ENCODE measurements at regions of chr10 and their contacts with region 1.

Region 1: DNA sequence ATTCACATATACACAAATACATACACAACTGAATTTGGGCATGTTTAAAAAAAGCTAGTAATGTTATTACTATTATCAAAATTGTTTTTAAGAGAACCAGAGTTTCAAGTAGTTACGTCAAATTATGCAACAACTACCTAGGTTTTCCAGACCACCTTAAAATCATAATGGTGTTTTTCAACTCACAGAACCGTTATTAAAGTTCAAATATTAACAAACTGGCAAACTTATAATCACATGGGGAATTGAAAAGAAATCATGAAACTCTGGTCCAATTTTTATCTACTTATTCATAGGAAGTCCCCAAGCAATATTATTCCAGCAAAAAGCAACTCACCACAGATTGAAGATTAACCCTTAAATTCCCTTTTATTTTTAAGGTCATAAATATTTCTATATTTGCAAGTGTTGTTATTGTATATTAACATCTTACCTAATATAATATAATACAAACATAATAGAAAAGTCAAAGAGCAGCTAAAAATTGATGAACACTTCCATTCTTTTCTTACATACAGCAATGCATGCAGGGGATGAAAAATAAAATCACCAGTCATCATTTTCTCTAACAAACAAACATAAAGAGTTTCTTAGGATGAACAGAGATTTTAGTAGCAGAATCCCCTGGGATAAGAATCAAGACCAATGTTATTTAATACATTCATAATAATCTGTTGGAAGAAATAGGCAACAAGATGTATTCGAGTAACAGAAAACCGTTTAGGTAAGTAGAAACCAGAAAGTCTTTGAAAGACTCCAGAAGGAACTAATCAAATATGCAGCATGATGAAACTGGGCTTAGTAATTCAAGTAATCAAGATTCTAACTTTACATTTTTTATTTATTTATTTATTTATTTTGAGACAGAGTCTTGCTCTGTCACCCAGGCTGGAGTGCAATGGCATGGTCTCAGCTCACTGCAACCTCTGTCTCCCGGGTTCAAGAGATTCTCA is 391.1 kb downstream of the PARD3 start:
- DNase-seq: no peak
- ATAC-seq: no peak
- H3K4me3 ChIP-seq: no peak overlapping the region
- H3K27ac ChIP-seq: no peak overlapping the region
- H3K4me1 ChIP-seq: no peaks in the 10 kb centered on the region
- H3K27me3 ChIP-seq: no peaks in the 10 kb centered on the region
- CTCF ChIP-seq: no peak
- EP300 ChIP-seq: no peak
- POLR2A ChIP-seq: no peak
- RAD21 ChIP-seq: no peak

Region 2: DNA sequence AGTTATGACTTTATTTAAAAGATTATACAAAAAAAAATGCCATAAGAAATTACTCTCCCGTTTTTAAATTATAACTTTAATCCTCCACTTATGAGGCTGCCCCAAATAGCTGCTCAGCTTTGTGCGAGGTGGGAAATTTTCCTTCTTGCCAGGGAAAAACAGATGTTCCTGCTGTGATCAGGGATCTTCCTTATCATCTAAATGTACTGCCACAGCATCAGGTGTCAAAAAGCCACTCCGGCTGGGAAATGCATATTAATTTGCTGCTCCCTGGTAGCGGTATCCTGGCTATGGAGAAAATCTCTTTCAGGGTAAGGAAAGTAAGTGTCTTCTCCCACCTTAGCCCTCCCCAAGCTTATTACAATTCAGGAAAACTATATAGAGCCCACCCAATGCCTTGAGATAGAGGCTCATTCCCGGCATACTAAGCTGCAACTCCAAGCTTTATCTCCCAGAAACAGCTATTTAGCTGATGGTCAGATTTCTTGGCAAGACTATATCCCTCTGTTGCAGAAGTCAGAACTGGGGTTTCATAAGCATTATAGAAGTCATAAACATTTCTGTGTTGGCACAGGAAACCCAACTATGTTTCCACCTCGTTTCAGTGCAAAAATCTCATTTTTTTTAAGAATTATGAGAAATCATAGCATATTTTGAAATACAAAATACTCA is 30.8 kb after region 1 on chr10:
- CTCF ChIA-PET with region 1: no interaction called
- POLR2A ChIA-PET with region 1: no interaction called
- RAD21 ChIA-PET with region 1: no interaction called
- SMC1A ChIA-PET with region 1: no interaction called
- in situ Hi-C with region 1: no loop called
- intact Hi-C with region 1: no loop called
- DNase-seq: no peak
- ATAC-seq: no peak
- H3K4me3 ChIP-seq: no peak overlapping the region
- H3K27ac ChIP-seq: no peak overlapping the region
- H3K4me1 ChIP-seq: no peaks in the 10 kb centered on the region
- H3K27me3 ChIP-seq: no peaks in the 10 kb centered on the region
- CTCF ChIP-seq: no peak
- EP300 ChIP-seq: no peak
- POLR2A ChIP-seq: no peak
- RAD21 ChIP-seq: no peak

Region 3: GRCh38 chr10:34489973-34490745 is 66.2 kb after region 1 on chr10:
- CTCF ChIA-PET with region 1: no interaction called
- POLR2A ChIA-PET with region 1: no interaction called
- RAD21 ChIA-PET with region 1: no interaction called
- SMC1A ChIA-PET with region 1: no interaction called
- in situ Hi-C with region 1: no loop called
- intact Hi-C with region 1: loop called (anchors 10 kb)
- DNase-seq: no peak
- ATAC-seq: peak; percentile 66
- H3K4me3 ChIP-seq: no peak overlapping the region
- H3K27ac ChIP-seq: no peak overlapping the region
- H3K4me1 ChIP-seq: no peaks in the 10 kb centered on the region
- H3K27me3 ChIP-seq: no peaks in the 10 kb centered on the region
- CTCF ChIP-seq: no peak
- EP300 ChIP-seq: no peak
- POLR2A ChIP-seq: no peak
- RAD21 ChIP-seq: no peak